OCI-LY7 (cell line): ENCODE measurements at regions of chr6 and their contacts with region 1.

Region 1: GRCh38 chr6:30914076-30914853 is at the start of gene VARS2:
- DNase-seq: peak; percentile 87
- H3K4me3 ChIP-seq: peak within 1 kb of the TSS; percentile 76
- H3K27ac ChIP-seq: peak within 1 kb of the TSS; percentile 63
- H3K4me1 ChIP-seq: peaks cover 23% of the 10 kb centered on the region
- CTCF ChIP-seq: peak; percentile 44
- total RNA-seq, gene VARS2: 71.4 and 81.8 TPM in 2 replicates

Region 2: GRCh38 chr6:30828027-30828960 is 86.0 kb before region 1 on chr6:
- CTCF ChIA-PET with region 1: no interaction called
- POLR2A ChIA-PET with region 1: no interaction called
- intact Hi-C with region 1: loop called (anchors 1 kb)
- DNase-seq: peak; percentile 77
- H3K4me3 ChIP-seq: no peak overlapping the region
- H3K27ac ChIP-seq: no peak overlapping the region
- H3K4me1 ChIP-seq: peaks cover 11% of the 10 kb centered on the region
- CTCF ChIP-seq: peak; percentile 96